ENCODE measurements at regions of chr20 and their contacts with region 1.

Region 1: DNA sequence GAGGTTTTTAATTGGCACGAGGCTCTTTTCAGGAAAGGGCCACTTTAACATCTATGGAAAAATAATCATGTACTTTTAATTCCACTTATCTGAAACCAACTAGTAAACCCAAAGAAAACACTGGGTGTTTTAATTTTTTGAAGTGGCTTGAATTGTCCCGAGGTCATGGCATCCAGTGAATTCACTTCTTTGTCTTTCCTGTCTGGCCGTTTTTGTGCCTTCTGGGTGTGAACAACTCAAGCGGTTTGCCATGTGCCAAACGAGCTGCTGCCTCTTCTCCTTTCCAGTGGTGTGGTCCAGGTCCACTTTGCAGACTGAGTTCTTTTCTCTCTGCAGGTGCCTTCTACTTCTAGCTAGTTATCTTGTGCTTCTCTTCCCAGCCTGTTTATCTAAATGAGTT is 117.5 kb downstream of the PLCB4 start:
- DNase-seq: no peak
- ATAC-seq: no peak
- H3K4me3 ChIP-seq: no peak overlapping the region
- H3K27ac ChIP-seq: no peak overlapping the region
- H3K4me1 ChIP-seq: no peaks in the 10 kb centered on the region
- H3K27me3 ChIP-seq: no peaks in the 10 kb centered on the region
- CTCF ChIP-seq: no peak
- EP300 ChIP-seq: no peak
- POLR2A ChIP-seq: no peak
- RAD21 ChIP-seq: no peak

Region 2: DNA sequence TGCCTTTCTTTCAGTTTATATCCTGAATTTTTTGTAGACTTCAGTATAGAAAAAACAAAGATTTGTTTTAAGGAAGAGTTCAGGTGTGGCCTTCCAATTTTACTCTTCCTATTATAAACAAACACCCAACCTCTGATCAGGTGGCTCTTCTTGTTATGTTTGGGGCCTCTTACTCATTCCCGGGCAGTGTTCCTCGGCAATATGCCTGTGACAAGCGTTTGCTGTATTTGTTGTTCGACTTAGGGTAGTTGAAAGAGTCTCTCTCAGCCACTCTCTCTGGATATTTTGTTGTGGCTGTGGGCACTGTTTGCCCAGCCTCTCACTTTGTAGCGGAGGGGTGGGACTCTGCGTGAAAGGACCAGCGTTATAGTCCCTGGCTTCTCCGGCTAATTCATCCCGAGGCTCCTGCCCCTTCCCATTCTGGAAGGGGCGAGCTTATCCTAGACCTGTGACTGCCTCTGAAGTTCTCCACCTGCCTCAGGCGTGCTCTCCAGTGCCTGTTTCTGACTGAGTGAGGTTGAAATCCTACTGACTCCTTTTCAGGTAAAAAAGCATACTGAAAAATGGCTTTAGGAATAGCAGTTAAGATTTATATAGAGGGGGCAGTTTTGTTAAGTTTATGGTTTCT is 20.1 kb before region 1 on chr20:
- CTCF ChIA-PET with region 1: no interaction called
- POLR2A ChIA-PET with region 1: no interaction called
- RAD21 ChIA-PET with region 1: no interaction called
- SMC1A ChIA-PET with region 1: no interaction called
- in situ Hi-C with region 1: no loop called
- intact Hi-C with region 1: loop called (anchors 2 kb)
- DNase-seq: no peak
- ATAC-seq: no peak
- H3K4me3 ChIP-seq: no peak overlapping the region
- H3K27ac ChIP-seq: no peak overlapping the region
- H3K4me1 ChIP-seq: no peaks in the 10 kb centered on the region
- H3K27me3 ChIP-seq: no peaks in the 10 kb centered on the region; a peak in 1 of 4 replicates
- CTCF ChIP-seq: no peak
- EP300 ChIP-seq: no peak
- POLR2A ChIP-seq: no peak
- RAD21 ChIP-seq: no peak

Measured in GM12878 (cell line).